Dorsolateral prefrontal cortex (tissue), 120 donors: ENCODE measurements at regions of chr6 and their contacts with region 1.

Region 1: DNA sequence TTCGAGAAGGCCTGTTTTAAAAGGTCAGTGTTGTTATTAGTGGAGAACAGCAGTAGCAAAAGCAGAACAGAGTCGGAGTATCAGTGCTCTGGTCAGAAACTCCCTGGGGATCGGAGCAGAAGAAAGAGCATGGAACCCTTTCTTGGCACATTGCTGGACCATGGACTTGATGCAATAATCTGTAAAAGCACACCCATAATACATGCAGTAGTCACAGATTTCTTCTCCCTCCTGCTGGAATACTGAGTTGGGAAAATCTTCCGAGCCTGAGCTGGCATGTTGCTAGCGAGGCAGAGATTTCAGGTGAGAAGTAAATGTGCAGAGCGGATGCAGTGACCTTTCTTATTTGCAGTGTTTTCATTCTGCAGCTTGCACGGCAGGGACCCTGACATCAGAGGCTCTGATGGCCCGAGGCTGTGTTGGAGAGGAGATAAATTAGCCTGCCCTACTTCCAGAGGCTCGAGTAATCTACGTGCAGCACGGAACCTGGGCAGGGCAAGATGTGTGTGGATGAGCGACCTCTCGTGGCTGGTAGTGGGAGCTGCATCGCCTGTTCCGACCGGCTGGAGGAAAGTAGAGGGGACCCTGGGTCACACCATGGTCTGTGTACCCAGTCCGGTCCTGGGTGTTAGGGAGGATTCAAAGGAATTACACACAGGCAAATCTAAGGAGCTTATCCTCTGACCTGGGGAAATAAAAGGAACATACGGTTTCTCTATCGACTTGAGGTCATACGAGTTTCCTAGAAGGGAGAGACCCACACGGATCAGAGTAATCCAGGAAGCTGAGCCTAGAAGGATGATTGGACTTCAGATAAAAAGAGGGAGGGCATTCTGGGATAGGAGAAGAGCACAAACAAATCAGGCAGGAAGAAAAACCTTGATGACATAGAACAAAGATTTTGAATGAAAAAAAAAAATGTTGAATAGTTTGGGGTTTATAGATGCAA is 137.0 kb upstream of the STMND1 start:
- DNase-seq: peak; percentile 64 to 86 (median 76)
- H3K4me3 ChIP-seq: peak overlapping the region in 55 of 59 donors; percentile 2 to 63 (median 40)
- H3K27ac ChIP-seq: peak overlapping the region in 10 of 59 donors; percentile 7 to 84 (median 28)
- H3K27me3 ChIP-seq: peaks cover 0 to 4% (median 0%) of the 10 kb centered on the region in 45 donors
- CTCF ChIP-seq: peak; percentile 57 to 95 (median 91)

Region 2: GRCh38 chr6:16200321-16200883 is 764.4 kb before region 1 on chr6:
- intact Hi-C with region 1: no loop called
- DNase-seq: peak in 1 of 10 donors; percentile 14
- H3K4me3 ChIP-seq: peak overlapping the region in 58 of 59 donors; percentile 13 to 63 (median 46)
- H3K27ac ChIP-seq: peak overlapping the region in 6 of 59 donors; percentile 1 to 46 (median 22)
- H3K27me3 ChIP-seq: peaks cover 0 to 3% (median 0%) of the 10 kb centered on the region in 45 donors
- CTCF ChIP-seq: no peak

Region 3: DNA sequence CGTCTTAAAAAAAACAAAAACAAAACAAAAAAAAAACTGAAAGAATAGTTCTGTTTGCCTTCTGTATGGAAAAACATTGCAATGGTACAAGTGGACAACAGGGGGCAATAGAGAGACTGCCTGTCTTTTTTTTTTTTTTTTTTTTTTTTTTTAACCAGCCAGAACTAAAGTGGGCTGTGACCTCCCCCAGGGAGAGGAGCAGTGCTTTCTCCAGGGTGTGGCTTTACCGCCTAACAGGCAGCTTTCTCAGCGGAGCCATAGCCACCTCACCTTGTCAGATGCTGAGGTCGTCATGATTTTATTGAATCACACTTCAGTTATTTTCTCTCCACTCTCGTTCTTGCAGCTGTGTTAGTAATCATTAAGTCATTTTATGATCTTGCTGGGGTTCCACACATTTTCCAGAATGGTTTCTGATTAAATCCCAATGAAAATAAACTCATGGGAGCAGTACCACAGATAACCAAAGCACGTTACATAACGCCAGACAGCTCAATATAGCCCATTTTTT is 648.0 kb before region 1 on chr6:
- intact Hi-C with region 1: no loop called
- DNase-seq: no peak
- H3K4me3 ChIP-seq: no peak overlapping the region
- H3K27ac ChIP-seq: peak overlapping the region in 33 of 59 donors; percentile 2 to 98 (median 51)
- H3K27me3 ChIP-seq: no peaks in the 10 kb centered on the region
- CTCF ChIP-seq: peak; percentile 58 to 88 (median 77)

Region 4: DNA sequence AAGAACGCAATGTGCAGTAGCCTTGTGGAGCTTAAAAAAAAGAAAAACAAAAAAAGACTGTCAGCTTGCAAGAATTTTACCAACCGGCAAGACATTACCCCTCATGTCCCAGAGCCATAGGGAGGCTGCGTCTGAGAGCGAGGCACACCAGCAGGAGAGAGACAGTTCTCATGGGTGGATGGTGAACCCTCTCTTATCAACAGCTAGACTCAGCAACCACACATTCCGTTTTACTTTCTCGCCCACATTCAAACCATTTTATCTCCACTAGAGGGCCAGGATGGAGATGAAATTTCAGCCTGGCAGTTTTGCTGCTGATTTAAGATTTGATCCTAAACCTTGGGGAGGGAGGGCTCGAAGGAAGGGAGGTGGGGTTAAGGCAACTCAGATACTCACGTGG is 450.6 kb before region 1 on chr6:
- intact Hi-C with region 1: loop called in 1 of 2 experiments (anchors 5 kb)
- DNase-seq: peak in 3 of 10 donors; percentile 5 to 48 (median 41)
- H3K4me3 ChIP-seq: peak overlapping the region in 46 of 59 donors; percentile 4 to 56 (median 31)
- H3K27ac ChIP-seq: peak overlapping the region in 57 of 59 donors; percentile 2 to 87 (median 68)
- H3K27me3 ChIP-seq: no peaks in the 10 kb centered on the region
- CTCF ChIP-seq: peak; percentile 26 to 76 (median 64)

Region 5: GRCh38 chr6:17042422-17043147 is 77.8 kb after region 1 on chr6:
- intact Hi-C with region 1: loop called in 1 of 2 experiments (anchors 10 kb)
- DNase-seq: peak in 8 of 10 donors; percentile 54 to 67 (median 57)
- H3K4me3 ChIP-seq: peak overlapping the region in 43 of 59 donors; percentile 1 to 52 (median 27)
- H3K27ac ChIP-seq: peak overlapping the region in 46 of 59 donors; percentile 2 to 83 (median 54)
- H3K27me3 ChIP-seq: no peaks in the 10 kb centered on the region
- CTCF ChIP-seq: peak in 55 of 56 donors; percentile 8 to 69 (median 45)